GM12878 (cell line): ENCODE measurements at regions of chr19 and their contacts with region 1.

Region 1: GRCh38 chr19:29596885-29597525 is 9.1 kb upstream of the POP4 start:
- DNase-seq: no peak
- ATAC-seq: no peak
- H3K4me3 ChIP-seq: no peak overlapping the region
- H3K27ac ChIP-seq: no peak overlapping the region
- H3K4me1 ChIP-seq: no peaks in the 10 kb centered on the region
- H3K27me3 ChIP-seq: no peaks in the 10 kb centered on the region; a peak in 1 of 4 replicates
- CTCF ChIP-seq: peak; percentile 22 to 48 (median 35); a peak in 3 of 6 replicates
- EP300 ChIP-seq: no peak
- POLR2A ChIP-seq: no peak
- RAD21 ChIP-seq: peak; percentile 66

Region 2: GRCh38 chr19:29478578-29479565 is 118.1 kb before region 1 on chr19:
- CTCF ChIA-PET with region 1: no interaction called
- POLR2A ChIA-PET with region 1: no interaction called
- RAD21 ChIA-PET with region 1: no interaction called
- SMC1A ChIA-PET with region 1: no interaction called
- in situ Hi-C with region 1: no loop called
- intact Hi-C with region 1: loop called (anchors 10 kb)
- DNase-seq: no peak
- ATAC-seq: 0 out of 3 replicates have a peak, but pooled peaks have one; percentile 42
- H3K4me3 ChIP-seq: no peak overlapping the region
- H3K27ac ChIP-seq: no peak overlapping the region
- H3K4me1 ChIP-seq: no peaks in the 10 kb centered on the region
- H3K27me3 ChIP-seq: no peaks in the 10 kb centered on the region; a peak in 1 of 4 replicates
- CTCF ChIP-seq: peak; percentile 18 to 38 (median 26); a peak in 4 of 6 replicates
- EP300 ChIP-seq: no peak
- POLR2A ChIP-seq: no peak
- RAD21 ChIP-seq: no peak